Pancreas (tissue), 10 donors: ENCODE measurements at regions of chr9 and their contacts with region 1.

Region 1: DNA sequence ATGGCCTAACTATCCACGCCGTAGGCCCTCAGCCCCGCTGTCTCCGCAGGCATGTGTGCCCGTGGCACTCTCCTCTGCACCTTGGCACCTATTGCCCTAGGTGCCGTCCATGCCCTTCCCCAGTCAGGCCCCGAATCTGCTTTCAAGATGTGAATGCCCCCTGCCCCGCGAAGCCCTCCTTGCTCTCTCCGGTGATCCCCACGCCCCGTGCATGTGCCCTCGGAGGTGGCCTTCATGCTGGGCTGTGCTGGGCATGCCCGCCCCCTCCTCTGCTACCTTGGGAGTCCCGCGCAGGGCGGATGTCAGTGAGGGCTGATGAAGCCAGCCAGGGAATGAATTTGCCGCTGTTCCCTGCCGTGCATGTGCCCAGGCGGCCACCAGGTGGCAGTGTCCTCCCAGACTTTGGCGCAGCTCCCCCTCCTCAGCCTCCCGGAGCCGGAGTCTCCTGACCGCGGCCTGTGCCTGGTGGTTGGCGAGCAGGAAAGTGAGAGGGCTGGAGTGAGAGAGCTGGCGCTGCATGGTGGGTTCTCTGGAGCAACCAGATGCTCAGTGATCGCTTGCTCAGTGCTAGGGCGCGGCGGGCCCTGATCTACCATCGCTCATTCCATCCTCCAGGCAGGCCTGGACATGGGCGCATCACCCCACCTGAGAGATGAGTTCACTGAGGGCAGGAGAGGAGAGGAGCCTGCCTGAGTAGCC is 112.9 kb upstream of the LMX1B start:
- DNase-seq: peak; percentile 58 to 90 (median 78)
- ATAC-seq: peak; percentile 73 to 86 (median 84)
- H3K4me3 ChIP-seq: no peak overlapping the region
- H3K27ac ChIP-seq: no peak overlapping the region
- H3K4me1 ChIP-seq: peaks cover 0 to 4% (median 0%) of the 10 kb centered on the region in 3 donors
- H3K27me3 ChIP-seq: no peaks in the 10 kb centered on the region
- CTCF ChIP-seq: peak; percentile 91 to 98 (median 96)

Region 2: GRCh38 chr9:125867751-125868415 is 633.0 kb before region 1 on chr9:
- intact Hi-C with region 1: no loop called
- DNase-seq: no peak
- ATAC-seq: no peak
- H3K4me3 ChIP-seq: no peak overlapping the region
- H3K27ac ChIP-seq: no peak overlapping the region
- H3K4me1 ChIP-seq: no peaks in the 10 kb centered on the region
- H3K27me3 ChIP-seq: no peaks in the 10 kb centered on the region
- CTCF ChIP-seq: no peak

Region 3: DNA sequence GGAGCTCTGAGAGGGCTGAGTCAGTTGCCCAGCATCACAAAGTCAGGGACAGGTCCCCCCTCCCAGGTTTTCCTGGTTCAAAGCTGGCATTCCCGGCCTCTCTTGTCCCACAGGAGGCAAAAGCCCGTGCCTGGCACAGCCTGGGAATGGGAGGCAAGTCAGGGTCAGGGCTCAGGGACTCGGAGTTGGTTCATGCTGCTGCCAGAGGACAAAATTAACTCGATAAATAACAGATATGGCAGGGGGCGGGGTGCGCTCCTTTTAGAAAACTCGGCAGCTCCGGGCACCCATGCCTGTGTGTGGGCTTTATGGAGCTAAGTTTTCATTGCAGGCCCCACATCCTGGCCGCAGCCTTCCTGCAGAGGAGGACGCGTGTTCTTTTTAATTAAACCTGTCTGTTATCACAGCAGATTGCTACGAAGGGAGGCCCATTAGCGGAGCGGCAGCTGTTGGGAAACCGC is 50.1 kb after region 1 on chr9:
- intact Hi-C with region 1: loop called (anchors 5 to 10 kb)
- DNase-seq: no peak
- ATAC-seq: no peak
- H3K4me3 ChIP-seq: no peak overlapping the region
- H3K27ac ChIP-seq: no peak overlapping the region
- H3K4me1 ChIP-seq: no peaks in the 10 kb centered on the region
- H3K27me3 ChIP-seq: no peaks in the 10 kb centered on the region
- CTCF ChIP-seq: no peak

Region 4: DNA sequence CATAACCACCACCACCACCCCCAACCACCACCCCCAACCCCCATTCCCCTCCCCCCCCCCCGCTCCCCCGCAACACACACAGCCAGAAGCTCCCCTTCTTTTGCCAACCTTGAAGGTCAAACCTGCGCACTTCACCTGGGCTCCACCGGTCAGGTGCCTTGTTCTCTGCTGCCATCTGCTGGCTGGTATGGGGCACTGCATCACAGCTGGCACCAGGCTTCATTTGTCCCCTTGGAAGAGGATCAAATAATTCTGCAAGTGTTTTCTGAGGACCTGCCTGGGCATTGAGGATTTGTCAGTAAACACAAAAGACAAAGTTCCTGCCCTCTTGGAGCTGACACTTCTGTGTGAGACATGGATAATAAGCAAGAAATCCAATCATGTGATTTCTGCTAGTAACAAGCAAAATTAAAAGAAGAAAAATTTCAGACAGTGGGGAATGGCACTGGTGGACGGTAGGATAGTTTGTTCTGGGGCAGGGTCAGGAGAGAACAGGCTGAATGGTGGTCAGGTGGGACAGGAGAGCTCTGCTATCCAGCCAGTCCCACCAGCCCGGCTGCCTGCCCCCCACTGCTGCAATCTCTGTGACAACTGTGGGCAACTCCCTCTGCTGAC is 57.3 kb after region 1 on chr9:
- intact Hi-C with region 1: loop called (anchors 5 to 10 kb)
- DNase-seq: peak; percentile 42 to 88 (median 77)
- ATAC-seq: peak; percentile 68 to 99 (median 94)
- H3K4me3 ChIP-seq: no peak overlapping the region
- H3K27ac ChIP-seq: no peak overlapping the region
- H3K4me1 ChIP-seq: no peaks in the 10 kb centered on the region
- H3K27me3 ChIP-seq: peaks cover 0 to 2% (median 0%) of the 10 kb centered on the region in 4 donors
- CTCF ChIP-seq: peak; percentile 86 to 94 (median 92)

Region 5: DNA sequence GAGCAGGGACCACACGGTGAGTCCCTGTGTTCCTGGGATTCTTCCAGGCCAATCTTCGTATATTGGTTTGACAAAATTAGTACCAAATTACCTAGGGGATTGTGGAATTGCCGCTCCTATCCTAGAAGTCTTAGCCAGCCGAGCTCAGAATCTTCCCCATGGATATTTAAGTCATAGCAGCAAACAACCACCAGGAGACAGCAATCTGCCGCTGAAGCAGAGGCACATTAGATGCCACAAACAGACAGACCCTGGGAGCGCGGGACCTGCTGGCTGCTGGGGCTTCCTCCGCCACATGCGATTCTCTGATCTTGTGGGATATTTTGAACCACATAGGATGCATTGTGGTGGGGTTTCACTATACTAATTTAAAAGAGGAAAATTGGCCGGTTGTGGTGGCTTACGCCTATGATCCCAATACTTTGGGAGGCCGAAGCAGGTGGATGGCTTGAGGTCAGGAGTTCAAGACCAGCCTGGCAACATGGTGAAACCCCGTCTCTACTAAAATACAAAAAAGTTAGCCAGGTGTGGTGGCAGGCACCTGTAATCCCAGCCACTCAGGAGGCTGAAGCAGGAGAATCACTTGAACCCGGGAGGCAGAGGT is 272.3 kb after region 1 on chr9:
- intact Hi-C with region 1: loop called in 1 of 3 experiments (anchors 10 kb)
- DNase-seq: peak in 1 of 6 donors; percentile 24
- ATAC-seq: no peak
- H3K4me3 ChIP-seq: no peak overlapping the region
- H3K27ac ChIP-seq: no peak overlapping the region
- H3K4me1 ChIP-seq: no peaks in the 10 kb centered on the region
- H3K27me3 ChIP-seq: no peaks in the 10 kb centered on the region
- CTCF ChIP-seq: peak in 2 of 4 donors; percentile 15 to 18

Region 6: DNA sequence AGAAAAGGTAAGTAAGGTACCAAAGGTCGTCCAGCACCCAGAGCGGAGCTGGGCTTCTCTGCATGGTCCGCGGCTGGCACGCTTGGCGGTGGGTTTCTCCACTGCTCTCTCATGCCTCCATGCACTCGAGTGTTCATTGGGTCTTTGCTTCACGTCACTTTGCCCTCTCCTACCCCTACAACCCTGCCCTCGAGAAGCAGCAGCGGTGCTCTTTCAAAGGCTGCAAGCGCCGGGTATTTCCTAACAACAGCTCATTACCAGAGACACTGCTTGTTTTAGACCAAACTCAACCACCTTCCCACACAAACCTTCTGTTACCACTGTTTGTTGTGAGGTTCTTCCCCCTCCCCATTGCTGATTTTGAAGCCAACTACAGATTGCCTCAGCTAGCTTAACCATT is 338.1 kb after region 1 on chr9:
- intact Hi-C with region 1: no loop called
- DNase-seq: no peak
- ATAC-seq: no peak
- H3K4me3 ChIP-seq: no peak overlapping the region
- H3K27ac ChIP-seq: no peak overlapping the region
- H3K4me1 ChIP-seq: no peaks in the 10 kb centered on the region
- H3K27me3 ChIP-seq: no peaks in the 10 kb centered on the region
- CTCF ChIP-seq: no peak